A673 (cell line): ENCODE measurements at regions of chr13 and their contacts with region 1.

Region 1: DNA sequence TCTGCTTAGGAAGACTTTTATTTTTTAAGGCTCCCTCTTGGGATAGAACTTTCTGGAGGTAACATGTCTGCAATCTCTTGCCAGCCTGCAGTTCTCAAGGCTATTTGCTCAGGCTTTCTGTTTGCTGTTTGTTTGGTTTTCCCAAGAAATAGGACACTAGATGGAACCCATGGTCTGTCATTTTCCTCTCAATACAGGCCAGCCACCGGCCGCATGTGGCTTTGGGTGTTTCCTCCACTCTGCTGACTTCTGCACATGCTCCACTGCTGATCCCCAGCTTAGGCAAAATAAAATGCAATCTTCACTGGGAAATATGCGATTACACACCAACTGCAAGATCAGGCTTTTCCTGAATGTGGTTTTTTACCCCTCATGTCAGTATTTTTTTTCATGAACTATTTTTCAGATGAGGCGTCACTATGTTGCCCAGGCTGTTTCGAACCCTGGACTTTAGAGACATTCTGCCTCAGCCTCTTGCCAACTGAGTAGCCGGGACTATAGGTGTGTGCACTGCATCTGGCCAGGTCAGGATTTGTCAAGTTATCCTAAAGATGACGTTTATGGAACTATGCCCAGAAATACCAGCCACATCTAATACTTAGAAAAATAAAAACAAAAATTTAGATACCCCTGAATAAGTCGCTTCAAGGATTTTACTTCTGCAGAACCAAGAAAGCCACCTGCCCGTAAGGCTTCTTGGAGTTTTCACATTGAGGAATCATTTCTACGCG is 94.3 kb upstream of the PABPC3 start:
- DNase-seq: no peak
- H3K4me3 ChIP-seq: no peak overlapping the region
- H3K27ac ChIP-seq: no peak overlapping the region
- H3K4me1 ChIP-seq: no peaks in the 10 kb centered on the region
- H3K27me3 ChIP-seq: no peaks in the 10 kb centered on the region
- CTCF ChIP-seq: no peak

Region 2: DNA sequence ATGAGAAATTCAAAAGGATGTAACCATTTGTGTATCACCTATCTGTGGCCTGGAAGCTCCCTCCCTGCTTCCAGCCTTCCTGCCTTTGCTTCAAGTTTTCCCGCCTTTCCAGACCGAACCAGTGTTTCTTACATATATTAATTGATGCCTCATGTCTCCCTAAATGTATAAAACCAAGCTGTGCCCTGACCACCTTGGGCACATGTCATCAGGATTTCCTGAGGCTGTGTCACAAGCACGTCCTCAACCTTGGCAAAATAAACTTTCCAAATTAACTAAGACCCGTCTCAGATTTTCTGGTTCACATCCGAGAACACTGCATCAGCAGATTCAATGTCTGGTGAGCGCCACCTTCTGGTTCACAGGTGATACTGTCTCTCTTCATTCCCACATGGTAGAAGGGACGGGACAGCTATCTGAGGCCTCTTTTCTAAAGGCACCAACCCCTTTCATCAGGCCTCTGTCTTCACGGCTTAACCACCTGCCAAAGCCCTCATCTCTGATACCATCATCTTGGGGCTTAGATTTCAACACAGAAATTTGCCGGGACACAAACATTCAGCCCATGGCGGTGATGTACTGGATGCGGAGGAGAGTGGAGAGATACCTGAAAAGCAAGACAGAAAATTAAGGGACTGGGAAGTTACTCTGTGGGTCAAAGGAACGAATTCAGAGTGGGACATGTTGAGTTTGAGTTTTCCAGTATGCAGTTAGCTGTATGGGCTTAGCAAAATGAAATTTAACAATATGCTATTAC is 35.6 kb after region 1 on chr13:
- CTCF ChIA-PET with region 1: interaction called, 7 read pairs
- POLR2A ChIA-PET with region 1: no interaction called
- intact Hi-C with region 1: loop called (anchors 1 kb)
- DNase-seq: peak; percentile 75
- H3K4me3 ChIP-seq: no peak overlapping the region
- H3K27ac ChIP-seq: no peak overlapping the region
- H3K4me1 ChIP-seq: no peaks in the 10 kb centered on the region
- H3K27me3 ChIP-seq: no peaks in the 10 kb centered on the region
- CTCF ChIP-seq: peak; percentile 80